Endothelial cell of umbilical vein (primary cell): ENCODE measurements at regions of chr1 and their contacts with region 1.

Region 1: DNA sequence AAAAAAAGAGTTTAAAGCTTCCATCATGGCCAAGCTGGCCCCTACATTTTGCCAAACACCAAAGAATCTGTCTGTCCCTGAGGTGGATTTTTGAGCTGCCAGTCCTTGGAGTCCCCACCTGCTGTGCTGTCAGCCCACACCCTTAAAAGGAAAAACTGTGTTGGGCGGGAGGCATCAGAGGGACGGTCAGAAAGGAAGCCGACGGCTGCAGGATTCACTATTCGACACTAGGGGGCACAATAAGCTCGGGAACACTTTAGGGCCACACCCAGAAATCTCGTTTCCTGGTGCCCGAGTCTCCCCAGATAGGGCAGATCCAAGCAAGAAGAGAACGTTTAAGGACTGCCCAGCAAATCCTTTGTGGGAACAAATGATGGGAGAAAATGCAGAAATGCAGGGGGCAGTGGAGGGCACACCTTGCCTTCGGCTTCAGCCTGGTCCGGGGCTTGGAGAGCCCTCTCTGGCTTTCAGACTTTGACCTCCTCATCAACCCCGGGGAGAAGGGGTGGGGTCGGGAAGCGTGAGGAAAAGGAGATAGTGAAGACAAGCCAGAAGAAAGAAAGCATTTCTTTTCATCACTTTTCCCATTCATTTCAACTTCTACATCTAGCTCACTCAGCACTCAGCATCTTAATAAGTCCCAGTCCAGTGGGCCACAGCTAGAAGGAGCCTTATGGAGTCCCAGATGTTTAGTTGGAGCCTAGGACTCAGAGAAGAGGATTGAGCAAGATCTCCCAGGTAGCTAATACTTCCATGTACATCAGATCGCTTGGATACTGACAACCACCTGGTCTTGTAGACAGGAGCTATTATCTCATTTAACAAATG is 5.0 kb upstream of the CTTNBP2NL start:
- DNase-seq: peak; percentile 91
- H3K4me3 ChIP-seq: peak overlapping the region; percentile 6 to 58 (median 29)
- H3K27ac ChIP-seq: peak overlapping the region; percentile 100
- H3K4me1 ChIP-seq: peaks cover 75% of the 10 kb centered on the region
- H3K27me3 ChIP-seq: no peaks in the 10 kb centered on the region
- CTCF ChIP-seq: peak; percentile 87 to 97
- POLR2A ChIP-seq: peak; percentile 69

Region 2: GRCh38 chr1:112230232-112230631 is 160.8 kb before region 1 on chr1:
- CTCF ChIA-PET with region 1: no interaction called
- POLR2A ChIA-PET with region 1: no interaction called
- dilution Hi-C with region 1: no loop called
- intact Hi-C with region 1: no loop called
- DNase-seq: no peak
- H3K4me3 ChIP-seq: no peak overlapping the region
- H3K27ac ChIP-seq: no peak overlapping the region
- H3K4me1 ChIP-seq: no peaks in the 10 kb centered on the region
- H3K27me3 ChIP-seq: no peaks in the 10 kb centered on the region
- CTCF ChIP-seq: no peak
- POLR2A ChIP-seq: no peak

Region 3: DNA sequence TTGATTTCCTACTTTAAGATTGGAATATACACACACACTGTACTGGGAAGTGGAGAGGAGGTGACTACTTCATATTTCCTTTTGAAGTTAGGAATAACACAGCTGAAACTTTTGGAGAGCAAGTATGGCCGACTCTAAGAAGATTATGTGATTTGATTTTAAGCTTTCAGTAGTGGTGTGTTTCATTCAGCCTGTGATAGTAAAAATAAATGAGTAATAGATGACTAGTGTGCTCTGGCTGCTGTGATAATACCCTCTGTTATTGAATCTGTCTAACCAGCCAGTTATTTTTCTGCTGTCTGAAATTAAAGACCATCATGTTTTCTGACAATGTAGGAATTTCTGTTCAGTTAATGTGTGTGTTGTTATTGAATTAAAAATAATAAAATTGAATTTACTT is 53.3 kb after region 1 on chr1:
- CTCF ChIA-PET with region 1: interaction called, 12 read pairs
- POLR2A ChIA-PET with region 1: interaction called, 6 read pairs
- dilution Hi-C with region 1: no loop called
- intact Hi-C with region 1: loop called (anchors 1 kb)
- DNase-seq: peak; percentile 84
- H3K4me3 ChIP-seq: no peak overlapping the region
- H3K27ac ChIP-seq: peak overlapping the region; percentile 95
- H3K4me1 ChIP-seq: peaks cover 45% of the 10 kb centered on the region
- H3K27me3 ChIP-seq: no peaks in the 10 kb centered on the region
- CTCF ChIP-seq: no peak
- POLR2A ChIP-seq: no peak

Region 4: GRCh38 chr1:112544011-112544688 is 153.2 kb after region 1 on chr1:
- CTCF ChIA-PET with region 1: interaction called, 7 read pairs
- POLR2A ChIA-PET with region 1: no interaction called
- dilution Hi-C with region 1: no loop called
- intact Hi-C with region 1: loop called (anchors 2 kb)
- DNase-seq: peak; percentile 92
- H3K4me3 ChIP-seq: peak overlapping the region in 1 of 3 experiments; percentile 27
- H3K27ac ChIP-seq: peak overlapping the region; percentile 99
- H3K4me1 ChIP-seq: peaks cover 27% of the 10 kb centered on the region
- H3K27me3 ChIP-seq: no peaks in the 10 kb centered on the region
- CTCF ChIP-seq: no peak
- POLR2A ChIP-seq: peak; percentile 32

Region 5: GRCh38 chr1:112706908-112707663 is 316.1 kb after region 1 on chr1 and contains the start of gene RHOC:
- CTCF ChIA-PET with region 1: interaction called, 16 read pairs
- POLR2A ChIA-PET with region 1: interaction called, 5 read pairs
- dilution Hi-C with region 1: no loop called
- intact Hi-C with region 1: loop called (anchors 1 kb)
- DNase-seq: peak; percentile 88
- H3K4me3 ChIP-seq: peak within 1 kb of the TSS; percentile 81 to 90 (median 89)
- H3K27ac ChIP-seq: peak within 1 kb of the TSS; percentile 88
- H3K4me1 ChIP-seq: peaks cover 40% of the 10 kb centered on the region
- H3K27me3 ChIP-seq: no peaks in the 10 kb centered on the region
- CTCF ChIP-seq: peak; percentile 97 to 98
- POLR2A ChIP-seq: peak; percentile 83
- total RNA-seq, gene RHOC: 652 and 699 TPM in 2 replicates

Region 6: DNA sequence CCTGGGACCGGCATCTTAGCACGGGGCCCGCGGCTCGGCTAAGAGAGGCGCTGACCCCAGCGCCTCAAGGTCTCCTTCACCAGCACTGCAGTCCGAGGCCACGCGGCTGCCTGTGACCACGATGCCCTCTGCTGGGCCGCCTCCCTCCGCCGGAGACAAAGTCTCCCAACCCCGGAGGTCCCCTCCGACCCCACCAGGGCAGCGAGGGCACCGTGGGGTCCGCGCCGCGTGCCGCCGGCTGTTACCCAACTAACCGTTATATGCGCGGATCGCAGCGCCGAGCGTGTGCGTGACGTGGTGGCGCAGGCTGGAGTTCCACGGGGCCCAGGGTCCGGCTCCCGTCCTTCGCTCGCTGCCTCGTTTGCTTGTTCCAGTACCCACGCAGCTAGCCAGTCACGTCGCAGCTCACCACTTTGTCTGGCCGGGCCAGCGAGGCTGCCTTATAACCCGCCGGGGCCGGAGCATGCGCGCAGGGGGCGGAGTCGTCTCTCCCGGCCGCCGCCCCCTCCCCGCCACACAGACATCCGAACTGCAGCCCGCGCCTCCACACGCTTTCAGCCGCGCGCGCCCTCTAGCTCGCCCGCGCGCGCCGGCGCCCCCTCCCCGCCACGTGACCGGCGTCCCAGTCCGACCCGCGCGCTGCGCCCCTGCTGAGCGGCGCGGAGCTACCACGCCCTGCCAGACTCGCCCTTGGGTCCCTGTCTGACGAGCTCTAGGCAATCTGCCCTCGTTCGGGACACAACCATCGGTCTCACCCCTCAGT is 565.0 kb after region 1 on chr1 and contains the start of gene SLC16A1:
- CTCF ChIA-PET with region 1: no interaction called
- POLR2A ChIA-PET with region 1: no interaction called
- dilution Hi-C with region 1: no loop called
- intact Hi-C with region 1: loop called (anchors 5 kb)
- DNase-seq: peak; percentile 96
- H3K4me3 ChIP-seq: peak within 1 kb of the TSS; percentile 91 to 99 (median 97)
- H3K27ac ChIP-seq: peak within 1 kb of the TSS; percentile 89
- H3K4me1 ChIP-seq: peaks cover 42% of the 10 kb centered on the region
- H3K27me3 ChIP-seq: no peaks in the 10 kb centered on the region
- CTCF ChIP-seq: peak in 1 of 2 donors; percentile 35
- POLR2A ChIP-seq: peak; percentile 99
- total RNA-seq, gene SLC16A1: 117 and 148 TPM in 2 replicates